ENCODE measurements at regions of chr12 and their contacts with region 1.

Region 1: DNA sequence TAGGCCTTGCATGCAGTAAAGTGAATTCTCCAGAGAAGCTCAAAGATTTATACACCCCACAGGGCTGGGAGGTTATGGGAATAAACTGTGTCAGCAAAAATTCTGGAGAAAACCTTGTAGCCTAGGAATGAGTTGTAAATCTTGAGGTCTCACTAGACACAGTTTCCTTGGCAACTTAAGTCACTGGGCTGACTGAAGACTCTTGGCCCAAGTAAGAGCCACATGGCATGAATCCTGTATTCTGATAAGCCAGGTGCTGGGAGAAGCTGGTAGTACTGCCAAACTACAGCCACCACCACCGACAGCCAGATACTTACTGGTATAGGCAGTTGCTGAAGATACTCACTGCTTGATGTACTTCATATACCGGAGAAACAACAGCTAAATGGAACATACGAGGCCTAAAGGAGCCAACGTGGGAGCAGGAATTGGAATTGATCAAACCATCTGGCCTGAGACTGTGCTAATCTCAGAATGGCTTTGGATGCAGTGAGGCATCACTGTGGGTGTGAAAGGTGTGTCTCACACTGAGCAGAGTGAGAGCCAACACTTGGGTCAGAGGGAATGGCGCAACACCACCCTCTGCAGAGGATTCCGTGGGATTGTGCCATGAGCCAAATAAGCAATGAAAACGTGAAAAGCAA is 102.8 kb upstream of the TMCC3 start:
- ATAC-seq: peak; percentile 38 to 86 (median 63)
- H3K4me3 ChIP-seq: no peak overlapping the region
- H3K27ac ChIP-seq: no peak overlapping the region
- H3K4me1 ChIP-seq: peaks cover 5 to 27% of the 10 kb centered on the region in 2 donors

Region 2: GRCh38 chr12:94553130-94553519 is 200.0 kb before region 1 on chr12:
- in situ Hi-C with region 1: loop called in 2 of 9 experiments (anchors 10 to 25 kb)
- ATAC-seq: peak in 2 of 8 experiments; percentile 69 to 80
- H3K4me3 ChIP-seq: no peak overlapping the region
- H3K27ac ChIP-seq: no peak overlapping the region
- H3K4me1 ChIP-seq: no peaks in the 10 kb centered on the region

Region 3: DNA sequence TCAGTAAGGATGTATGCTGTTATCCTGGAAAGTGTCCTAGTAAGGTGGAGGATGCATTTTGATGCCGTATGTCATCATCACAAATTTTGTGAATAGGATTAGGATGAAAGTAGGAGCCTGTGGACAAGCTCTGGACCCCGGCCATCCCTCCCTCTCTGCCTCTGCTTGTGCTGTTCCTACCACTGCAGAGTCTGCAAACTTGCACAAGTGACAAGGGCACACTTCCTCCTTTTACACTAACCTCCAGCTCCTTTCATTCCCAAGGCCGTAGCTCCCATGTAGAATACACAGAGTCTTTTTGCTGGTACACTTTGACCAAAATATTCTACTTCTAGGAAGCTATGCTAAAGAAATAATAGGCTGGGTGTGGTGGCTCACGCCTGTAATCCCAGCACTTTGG is 89.5 kb before region 1 on chr12:
- in situ Hi-C with region 1: loop called in 1 of 9 experiments (anchors 10 kb)
- ATAC-seq: no peak
- H3K4me3 ChIP-seq: no peak overlapping the region
- H3K27ac ChIP-seq: no peak overlapping the region
- H3K4me1 ChIP-seq: peaks cover 0 to 10% of the 10 kb centered on the region in 2 donors

Region 4: DNA sequence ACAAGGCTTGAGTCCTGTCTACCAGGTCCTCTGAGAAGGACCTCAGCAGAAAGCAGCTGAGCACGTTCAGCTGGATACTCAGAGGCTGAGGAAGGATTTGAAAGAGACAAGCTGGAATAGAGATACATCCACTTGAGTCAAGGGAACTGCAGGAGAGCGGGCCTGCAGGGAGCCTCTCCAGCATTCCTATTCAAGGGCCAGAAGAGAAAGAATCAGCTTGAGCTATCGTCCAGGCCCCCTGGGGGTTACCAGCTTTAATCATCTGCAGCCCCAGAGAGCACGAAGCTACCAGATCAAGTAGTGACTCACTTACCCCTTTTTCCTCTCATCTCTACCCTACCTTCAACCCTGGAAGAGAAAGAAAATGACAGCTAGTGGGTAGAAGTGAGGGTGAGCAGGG is 169.4 kb after region 1 on chr12:
- in situ Hi-C with region 1: no loop called
- ATAC-seq: no peak
- H3K4me3 ChIP-seq: no peak overlapping the region
- H3K27ac ChIP-seq: no peak overlapping the region
- H3K4me1 ChIP-seq: no peaks in the 10 kb centered on the region

Measured in motor neuron (in vitro differentiated cells).